ENCODE measurements at regions of chr16 and their contacts with region 1.

Region 1: DNA sequence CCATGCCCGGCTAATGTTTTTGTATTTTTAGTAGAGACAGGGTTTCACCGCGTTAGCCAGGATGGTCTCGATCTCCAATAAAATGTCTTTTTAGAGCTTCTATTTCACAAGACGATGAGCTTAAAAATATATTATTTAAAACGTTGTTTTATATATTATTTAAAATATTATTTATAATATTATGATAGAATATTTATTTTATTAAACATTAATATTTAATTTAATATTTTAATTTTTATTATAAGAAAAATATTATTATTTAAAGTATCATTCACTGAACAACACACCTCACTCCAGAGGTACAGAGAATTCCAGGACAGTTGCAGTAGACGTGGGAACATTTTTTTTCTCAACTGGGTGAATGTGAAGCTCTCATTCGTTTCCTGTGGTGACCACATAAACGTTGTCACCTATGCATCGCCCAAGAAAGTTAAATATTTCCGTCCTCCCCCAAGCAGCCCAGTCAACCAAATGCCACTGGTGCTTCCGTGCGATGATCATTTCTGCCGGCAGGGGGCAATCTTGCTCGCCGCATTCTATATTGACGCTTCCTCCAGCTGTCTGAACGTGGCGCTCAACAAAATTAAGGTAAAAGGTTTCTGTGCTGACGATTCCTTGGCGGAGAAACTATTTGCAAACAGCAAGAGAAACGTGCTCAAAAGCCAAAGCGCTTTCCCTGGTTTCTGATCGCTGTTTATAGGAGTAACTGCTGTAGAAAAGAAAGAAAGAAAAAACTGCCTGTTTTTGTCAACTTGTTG is 41.7 kb upstream of the PRSS54 start:
- DNase-seq: peak; percentile 74 to 78 (median 75)
- H3K4me3 ChIP-seq: no peak overlapping the region
- H3K4me3 Mint-ChIP-seq: peak overlapping the region in 5 of 8 donors; percentile 24 to 74 (median 57)
- H3K27ac ChIP-seq: no peak overlapping the region
- H3K27ac Mint-ChIP-seq: no peak overlapping the region
- H3K4me1 ChIP-seq: no peaks in the 10 kb centered on the region
- H3K4me1 Mint-ChIP-seq: peaks cover 0 to 7% (median 6%) of the 10 kb centered on the region in 4 donors
- H3K27me3 ChIP-seq: no peaks in the 10 kb centered on the region
- H3K27me3 Mint-ChIP-seq: peaks cover 8 to 11% of the 10 kb centered on the region in 2 donors

Region 2: GRCh38 chr16:57941016-57941656 is 395.4 kb before region 1 on chr16:
- CTCF ChIA-PET with region 1: no interaction called
- POLR2A ChIA-PET with region 1: no interaction called
- intact Hi-C with region 1: no loop called
- DNase-seq: no peak
- H3K4me3 ChIP-seq: no peak overlapping the region
- H3K4me3 Mint-ChIP-seq: no peak overlapping the region
- H3K27ac ChIP-seq: no peak overlapping the region
- H3K27ac Mint-ChIP-seq: no peak overlapping the region
- H3K4me1 ChIP-seq: no peaks in the 10 kb centered on the region
- H3K4me1 Mint-ChIP-seq: no peaks in the 10 kb centered on the region
- H3K27me3 ChIP-seq: no peaks in the 10 kb centered on the region
- H3K27me3 Mint-ChIP-seq: peaks cover 5% of the 10 kb centered on the region in 2 donors

Region 3: GRCh38 chr16:58137581-58137980 is 198.9 kb before region 1 on chr16:
- CTCF ChIA-PET with region 1: no interaction called
- POLR2A ChIA-PET with region 1: no interaction called
- intact Hi-C with region 1: no loop called
- DNase-seq: no peak
- H3K4me3 ChIP-seq: no peak overlapping the region
- H3K4me3 Mint-ChIP-seq: no peak overlapping the region
- H3K27ac ChIP-seq: no peak overlapping the region
- H3K27ac Mint-ChIP-seq: peak overlapping the region in 1 of 7 donors; percentile 61
- H3K4me1 ChIP-seq: no peaks in the 10 kb centered on the region
- H3K4me1 Mint-ChIP-seq: no peaks in the 10 kb centered on the region
- H3K27me3 ChIP-seq: no peaks in the 10 kb centered on the region
- H3K27me3 Mint-ChIP-seq: no peaks in the 10 kb centered on the region

Region 4: DNA sequence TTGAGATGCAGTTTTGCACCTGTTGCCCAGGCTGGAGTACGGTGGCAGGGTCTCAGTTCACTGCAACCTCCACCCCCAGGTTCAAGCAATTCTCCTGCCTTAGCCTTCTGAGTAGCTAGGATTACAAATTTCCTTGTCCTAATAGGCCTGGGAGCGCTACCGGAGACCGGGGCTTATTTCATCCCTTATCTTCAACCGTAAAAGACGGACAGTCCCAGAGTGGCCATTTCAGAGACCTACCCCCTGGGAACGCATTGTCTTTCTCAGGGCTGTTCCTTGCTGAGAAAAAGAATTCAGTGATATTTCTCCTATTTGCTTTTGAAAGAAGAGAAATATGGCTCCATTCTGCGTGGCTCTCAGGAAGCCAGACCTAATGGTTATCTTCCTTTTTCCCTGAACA is 16.2 kb after region 1 on chr16:
- CTCF ChIA-PET with region 1: interaction called, 18 read pairs
- POLR2A ChIA-PET with region 1: no interaction called
- intact Hi-C with region 1: no loop called
- DNase-seq: no peak
- H3K4me3 ChIP-seq: no peak overlapping the region
- H3K4me3 Mint-ChIP-seq: no peak overlapping the region
- H3K27ac ChIP-seq: no peak overlapping the region
- H3K27ac Mint-ChIP-seq: no peak overlapping the region
- H3K4me1 ChIP-seq: no peaks in the 10 kb centered on the region
- H3K4me1 Mint-ChIP-seq: no peaks in the 10 kb centered on the region
- H3K27me3 ChIP-seq: no peaks in the 10 kb centered on the region
- H3K27me3 Mint-ChIP-seq: peaks cover 25 to 27% of the 10 kb centered on the region in 2 donors

Region 5: DNA sequence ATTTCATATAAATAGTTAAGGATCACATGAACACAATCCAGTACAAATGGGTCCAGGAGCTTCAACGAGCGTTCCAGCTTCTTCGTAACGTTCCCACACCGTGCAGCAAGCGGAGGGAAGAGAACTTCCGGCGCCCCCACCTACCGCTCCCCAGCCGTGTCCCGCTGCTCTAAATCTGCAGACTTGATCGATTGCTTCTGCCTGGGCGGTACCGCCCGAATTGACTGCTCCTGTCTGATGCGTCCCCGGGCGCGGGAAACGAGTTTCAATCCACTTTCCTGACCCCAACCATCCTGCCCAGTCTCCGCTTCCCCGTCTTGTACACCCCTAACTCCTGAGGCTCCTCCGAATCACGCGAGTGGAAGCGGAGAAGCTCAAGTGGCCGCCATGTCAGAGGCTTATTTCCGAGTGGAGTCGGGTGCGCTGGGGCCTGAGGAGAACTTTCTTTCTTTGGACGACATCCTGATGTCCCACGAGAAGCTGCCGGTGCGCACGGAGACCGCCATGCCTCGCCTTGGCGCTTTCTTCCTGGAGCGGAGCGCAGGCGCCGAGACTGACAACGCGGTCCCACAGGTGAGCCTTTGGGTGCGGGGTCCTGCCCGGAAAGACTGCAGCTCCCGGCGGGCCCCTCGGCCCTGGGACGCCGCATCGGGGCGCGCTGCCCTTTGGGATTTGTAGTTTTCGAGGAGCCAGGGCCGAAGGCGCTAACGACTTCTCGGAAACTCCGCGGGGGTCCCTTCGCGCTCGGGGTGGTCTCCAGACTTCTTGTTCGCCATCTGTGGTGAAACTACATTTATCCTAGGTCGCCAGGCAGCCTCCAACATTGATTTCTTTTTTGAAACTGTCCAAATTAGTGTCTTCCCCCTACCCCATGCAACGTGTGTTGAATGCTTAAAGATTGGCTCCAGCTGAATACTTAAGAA is 56.0 kb after region 1 on chr16 and contains the start of gene GINS3:
- CTCF ChIA-PET with region 1: interaction called, 11 read pairs
- POLR2A ChIA-PET with region 1: no interaction called
- intact Hi-C with region 1: no loop called
- DNase-seq: peak; percentile 77 to 82 (median 80)
- H3K4me3 ChIP-seq: peak within 1 kb of the TSS; percentile 99
- H3K4me3 Mint-ChIP-seq: peak within 1 kb of the TSS; percentile 98 to 100 (median 99)
- H3K27ac ChIP-seq: peak within 1 kb of the TSS; percentile 75
- H3K27ac Mint-ChIP-seq: peak within 1 kb of the TSS; percentile 90 to 100 (median 97)
- H3K4me1 ChIP-seq: peaks cover 7% of the 10 kb centered on the region
- H3K4me1 Mint-ChIP-seq: peaks cover 3 to 20% (median 13%) of the 10 kb centered on the region in 4 donors
- H3K27me3 ChIP-seq: no peaks in the 10 kb centered on the region
- H3K27me3 Mint-ChIP-seq: no peaks in the 10 kb centered on the region
- total RNA-seq, gene GINS3: 1.3 to 2.2 TPM

Region 6: GRCh38 chr16:58451945-58452401 is 115.5 kb after region 1 on chr16:
- CTCF ChIA-PET with region 1: no interaction called
- POLR2A ChIA-PET with region 1: no interaction called
- intact Hi-C with region 1: no loop called
- DNase-seq: no peak
- H3K4me3 ChIP-seq: no peak overlapping the region
- H3K4me3 Mint-ChIP-seq: no peak overlapping the region
- H3K27ac ChIP-seq: no peak overlapping the region
- H3K27ac Mint-ChIP-seq: no peak overlapping the region
- H3K4me1 ChIP-seq: no peaks in the 10 kb centered on the region
- H3K4me1 Mint-ChIP-seq: no peaks in the 10 kb centered on the region
- H3K27me3 ChIP-seq: no peaks in the 10 kb centered on the region
- H3K27me3 Mint-ChIP-seq: peaks cover 10 to 17% of the 10 kb centered on the region in 2 donors

Region 7: GRCh38 chr16:58487566-58488351 is 151.2 kb after region 1 on chr16:
- CTCF ChIA-PET with region 1: interaction called, 238 read pairs
- POLR2A ChIA-PET with region 1: interaction called, 9 read pairs
- intact Hi-C with region 1: loop called (anchors 1 kb)
- DNase-seq: peak; percentile 59 to 71 (median 62)
- H3K4me3 ChIP-seq: no peak overlapping the region
- H3K4me3 Mint-ChIP-seq: peak overlapping the region in 3 of 8 donors; percentile 20 to 39 (median 26)
- H3K27ac ChIP-seq: no peak overlapping the region
- H3K27ac Mint-ChIP-seq: no peak overlapping the region
- H3K4me1 ChIP-seq: no peaks in the 10 kb centered on the region
- H3K4me1 Mint-ChIP-seq: peaks cover 0 to 3% (median 0%) of the 10 kb centered on the region in 4 donors
- H3K27me3 ChIP-seq: no peaks in the 10 kb centered on the region
- H3K27me3 Mint-ChIP-seq: peaks cover 4 to 8% of the 10 kb centered on the region in 2 donors